ENCODE measurements at regions of chr2 and their contacts with region 1.

Region 1: DNA sequence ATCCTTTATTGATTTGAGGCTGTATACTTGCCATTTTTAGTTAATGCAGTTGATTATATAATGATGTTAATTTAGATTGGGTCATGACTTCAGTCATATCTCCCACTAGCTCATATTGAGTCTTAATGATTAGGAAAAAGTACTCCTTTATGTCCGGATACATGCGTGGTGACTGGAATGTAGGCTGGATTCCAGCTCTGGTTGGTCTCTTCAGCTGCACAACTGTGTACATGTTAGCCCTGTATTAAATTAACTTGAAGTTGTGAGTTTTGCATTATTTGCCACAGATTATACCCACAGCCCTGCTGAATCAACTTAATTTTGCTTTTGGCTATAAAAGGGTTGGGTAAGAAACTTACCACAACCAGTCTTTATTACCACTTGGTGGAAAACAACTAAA is 22.5 kb downstream of the MOB4 start:
- DNase-seq: no peak
- ATAC-seq: no peak
- H3K4me3 ChIP-seq: no peak overlapping the region
- H3K27ac ChIP-seq: no peak overlapping the region
- H3K4me1 ChIP-seq: no peaks in the 10 kb centered on the region
- H3K27me3 ChIP-seq: no peaks in the 10 kb centered on the region
- CTCF ChIP-seq: no peak

Region 2: DNA sequence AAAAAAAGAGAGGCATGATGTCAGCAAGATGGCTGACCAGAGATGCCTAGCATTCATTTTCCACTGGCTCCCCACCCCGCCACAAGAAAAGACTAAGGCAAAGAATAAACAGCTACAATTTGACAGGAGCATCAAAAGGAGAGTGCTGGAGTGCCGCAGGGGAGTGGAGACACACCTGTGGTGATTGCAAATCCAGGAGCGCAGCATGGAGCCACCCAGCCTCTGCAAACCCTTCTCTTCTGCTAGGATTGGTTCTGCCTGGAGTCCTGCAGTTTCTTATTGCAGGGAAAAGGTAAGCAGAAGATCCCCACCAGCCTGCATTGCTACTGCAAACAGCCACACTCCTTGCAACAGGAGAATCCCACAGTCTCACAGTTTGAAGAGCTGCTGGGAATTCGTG is 220.6 kb after region 1 on chr2:
- CTCF ChIA-PET with region 1: no interaction called
- POLR2A ChIA-PET with region 1: interaction called, 21 read pairs
- intact Hi-C with region 1: no loop called
- DNase-seq: no peak
- ATAC-seq: no peak
- H3K4me3 ChIP-seq: no peak overlapping the region
- H3K27ac ChIP-seq: no peak overlapping the region
- H3K4me1 ChIP-seq: no peaks in the 10 kb centered on the region
- H3K27me3 ChIP-seq: no peaks in the 10 kb centered on the region
- CTCF ChIP-seq: no peak